B cell (primary cell): ENCODE measurements at regions of chr1 and their contacts with region 1.

Region 1: DNA sequence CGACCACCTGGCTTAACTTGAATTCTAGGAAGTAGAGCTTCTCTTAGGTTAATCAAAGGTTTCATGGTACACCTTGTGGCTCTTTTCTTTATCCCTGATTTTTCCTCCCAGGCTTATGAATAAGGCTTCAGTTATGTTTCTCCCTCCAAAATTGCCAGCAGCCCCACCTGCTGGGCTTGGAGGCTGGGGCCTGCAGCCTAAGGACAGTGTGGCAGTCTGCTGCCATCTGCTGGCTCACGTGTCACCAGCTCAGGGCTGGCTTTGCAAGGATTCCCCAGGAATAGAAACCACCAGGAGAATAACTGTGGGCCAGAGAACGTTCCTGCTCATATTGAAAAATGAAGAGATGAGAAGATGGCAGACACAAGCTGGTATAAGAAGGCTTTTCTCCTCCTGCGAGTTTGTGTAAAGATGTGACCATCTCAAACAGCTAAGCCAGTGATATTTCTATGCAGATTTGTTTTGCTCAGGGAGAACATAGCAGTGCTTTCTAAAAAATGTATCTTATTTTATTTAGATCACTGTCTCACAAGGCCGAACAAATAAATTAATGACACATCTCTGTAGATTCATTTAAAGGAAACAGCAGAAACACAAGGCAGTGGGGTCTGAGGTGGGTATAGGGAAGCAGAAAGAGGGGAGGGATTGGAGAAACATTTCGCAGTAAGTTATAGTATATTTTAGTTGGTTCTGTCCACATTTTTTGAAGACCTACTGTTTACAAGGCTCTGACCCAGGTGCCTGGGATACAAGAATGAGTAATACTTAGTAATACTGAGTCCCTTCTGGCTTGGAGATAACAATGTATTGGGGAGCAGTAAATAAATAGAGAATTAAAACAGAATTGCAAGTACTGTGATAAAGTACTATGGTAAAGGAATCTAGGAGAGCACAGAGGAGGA is 291.1 kb upstream of the SGIP1 start:
- DNase-seq: peak; percentile 75
- ATAC-seq: peak; percentile 94
- H3K4me3 ChIP-seq: no peak overlapping the region
- H3K4me3 Mint-ChIP-seq: no peak overlapping the region
- H3K27ac ChIP-seq: no peak overlapping the region
- H3K27ac Mint-ChIP-seq: no peak overlapping the region
- H3K4me1 ChIP-seq: no peaks in the 10 kb centered on the region
- H3K4me1 Mint-ChIP-seq: peaks cover 7% of the 10 kb centered on the region
- H3K27me3 ChIP-seq: peaks cover 0 to 3% (median 0%) of the 10 kb centered on the region in 4 experiments
- H3K27me3 Mint-ChIP-seq: peaks cover 17% of the 10 kb centered on the region
- CTCF ChIP-seq: peak; percentile 97

Region 2: GRCh38 chr1:64675718-64676345 is 1567.1 kb before region 1 on chr1:
- CTCF ChIA-PET with region 1: no interaction called
- POLR2A ChIA-PET with region 1: no interaction called
- intact Hi-C with region 1: loop called (anchors 10 kb)
- DNase-seq: peak; percentile 7
- ATAC-seq: no peak
- H3K4me3 ChIP-seq: no peak overlapping the region
- H3K4me3 Mint-ChIP-seq: no peak overlapping the region
- H3K27ac ChIP-seq: no peak overlapping the region
- H3K27ac Mint-ChIP-seq: no peak overlapping the region
- H3K4me1 ChIP-seq: no peaks in the 10 kb centered on the region
- H3K4me1 Mint-ChIP-seq: no peaks in the 10 kb centered on the region
- H3K27me3 ChIP-seq: no peaks in the 10 kb centered on the region
- H3K27me3 Mint-ChIP-seq: peaks cover 9% of the 10 kb centered on the region
- CTCF ChIP-seq: peak; percentile 84

Region 3: GRCh38 chr1:65952696-65953095 is 290.2 kb before region 1 on chr1:
- CTCF ChIA-PET with region 1: interaction called, 52 read pairs
- POLR2A ChIA-PET with region 1: no interaction called
- intact Hi-C with region 1: no loop called
- DNase-seq: no peak
- ATAC-seq: no peak
- H3K4me3 ChIP-seq: no peak overlapping the region
- H3K4me3 Mint-ChIP-seq: no peak overlapping the region
- H3K27ac ChIP-seq: no peak overlapping the region
- H3K27ac Mint-ChIP-seq: no peak overlapping the region
- H3K4me1 ChIP-seq: no peaks in the 10 kb centered on the region
- H3K4me1 Mint-ChIP-seq: no peaks in the 10 kb centered on the region
- H3K27me3 ChIP-seq: no peaks in the 10 kb centered on the region
- H3K27me3 Mint-ChIP-seq: peaks cover 8% of the 10 kb centered on the region
- CTCF ChIP-seq: no peak

Region 4: GRCh38 chr1:66119148-66119547 is 123.7 kb before region 1 on chr1:
- CTCF ChIA-PET with region 1: no interaction called
- POLR2A ChIA-PET with region 1: no interaction called
- intact Hi-C with region 1: no loop called
- DNase-seq: no peak
- ATAC-seq: no peak
- H3K4me3 ChIP-seq: no peak overlapping the region
- H3K4me3 Mint-ChIP-seq: no peak overlapping the region
- H3K27ac ChIP-seq: no peak overlapping the region
- H3K27ac Mint-ChIP-seq: no peak overlapping the region
- H3K4me1 ChIP-seq: no peaks in the 10 kb centered on the region
- H3K4me1 Mint-ChIP-seq: no peaks in the 10 kb centered on the region
- H3K27me3 ChIP-seq: no peaks in the 10 kb centered on the region
- H3K27me3 Mint-ChIP-seq: peaks cover 34% of the 10 kb centered on the region
- CTCF ChIP-seq: no peak

Region 5: DNA sequence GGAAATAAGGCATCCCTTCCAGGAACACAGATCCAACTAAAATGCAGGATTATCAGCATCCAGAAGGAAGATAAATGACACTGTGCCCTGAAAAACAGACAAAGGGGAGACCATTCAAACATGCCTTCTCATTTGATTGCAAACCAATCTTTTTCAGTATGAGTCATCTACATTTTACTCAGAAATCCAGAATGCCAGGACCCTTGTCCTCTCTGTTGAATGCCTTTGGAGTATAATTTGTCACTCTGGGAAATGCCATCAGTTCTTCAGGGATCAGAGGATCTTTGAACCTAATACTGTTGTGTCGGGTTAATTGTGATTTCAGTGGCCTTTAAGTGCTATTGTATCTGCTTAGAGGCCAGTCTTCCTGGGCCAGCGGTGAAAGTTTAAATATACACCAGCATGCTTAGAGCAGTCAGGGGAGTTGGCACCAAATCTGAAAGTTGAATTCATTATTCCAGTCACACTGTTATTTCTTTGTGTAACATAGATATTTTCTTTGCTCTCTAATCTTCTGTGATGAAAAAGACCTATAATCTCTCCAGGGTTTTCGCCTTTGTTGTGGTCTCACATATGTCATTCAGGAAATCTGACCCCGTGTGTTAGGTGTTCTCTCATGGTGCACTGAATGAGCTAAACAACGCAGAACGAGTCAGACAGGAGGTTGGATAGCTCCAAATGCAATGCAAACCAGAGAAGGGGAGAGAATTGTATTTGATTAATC is 73.8 kb before region 1 on chr1:
- CTCF ChIA-PET with region 1: no interaction called
- POLR2A ChIA-PET with region 1: no interaction called
- intact Hi-C with region 1: no loop called
- DNase-seq: no peak
- ATAC-seq: no peak
- H3K4me3 ChIP-seq: no peak overlapping the region
- H3K4me3 Mint-ChIP-seq: no peak overlapping the region
- H3K27ac ChIP-seq: no peak overlapping the region
- H3K27ac Mint-ChIP-seq: no peak overlapping the region
- H3K4me1 ChIP-seq: no peaks in the 10 kb centered on the region
- H3K4me1 Mint-ChIP-seq: no peaks in the 10 kb centered on the region
- H3K27me3 ChIP-seq: no peaks in the 10 kb centered on the region
- H3K27me3 Mint-ChIP-seq: peaks cover 5% of the 10 kb centered on the region
- CTCF ChIP-seq: no peak

Region 6: GRCh38 chr1:66227966-66228365 is 14.9 kb before region 1 on chr1:
- CTCF ChIA-PET with region 1: interaction called, 18 read pairs
- POLR2A ChIA-PET with region 1: no interaction called
- intact Hi-C with region 1: no loop called
- DNase-seq: no peak
- ATAC-seq: no peak
- H3K4me3 ChIP-seq: no peak overlapping the region
- H3K4me3 Mint-ChIP-seq: no peak overlapping the region
- H3K27ac ChIP-seq: no peak overlapping the region
- H3K27ac Mint-ChIP-seq: no peak overlapping the region
- H3K4me1 ChIP-seq: no peaks in the 10 kb centered on the region
- H3K4me1 Mint-ChIP-seq: no peaks in the 10 kb centered on the region
- H3K27me3 ChIP-seq: no peaks in the 10 kb centered on the region
- H3K27me3 Mint-ChIP-seq: peaks cover 27% of the 10 kb centered on the region
- CTCF ChIP-seq: no peak

Region 7: DNA sequence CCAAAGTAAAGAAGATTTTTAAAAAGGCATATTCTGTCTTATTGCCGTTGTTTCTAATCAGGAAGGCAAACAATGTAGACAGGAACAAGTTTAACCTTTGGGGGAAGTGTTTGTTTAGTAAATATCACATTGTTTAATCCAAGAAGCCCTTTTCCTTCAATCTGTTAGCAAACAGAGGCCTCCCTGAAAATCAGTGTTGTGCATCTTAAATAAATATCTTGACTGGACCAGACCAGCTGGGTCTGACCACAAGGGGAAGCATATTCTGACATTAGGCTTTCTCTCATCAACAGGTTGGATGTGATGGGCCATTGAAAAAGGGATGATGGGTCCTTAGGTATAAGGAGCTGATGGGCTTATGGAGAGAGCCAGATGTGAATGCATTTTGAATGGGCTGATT is 209.3 kb after region 1 on chr1:
- CTCF ChIA-PET with region 1: interaction called, 572 read pairs
- POLR2A ChIA-PET with region 1: no interaction called
- intact Hi-C with region 1: no loop called
- DNase-seq: no peak
- ATAC-seq: no peak
- H3K4me3 ChIP-seq: no peak overlapping the region
- H3K4me3 Mint-ChIP-seq: no peak overlapping the region
- H3K27ac ChIP-seq: no peak overlapping the region
- H3K27ac Mint-ChIP-seq: no peak overlapping the region
- H3K4me1 ChIP-seq: no peaks in the 10 kb centered on the region
- H3K4me1 Mint-ChIP-seq: no peaks in the 10 kb centered on the region
- H3K27me3 ChIP-seq: no peaks in the 10 kb centered on the region
- H3K27me3 Mint-ChIP-seq: no peaks in the 10 kb centered on the region
- CTCF ChIP-seq: no peak